HepG2 (cell line): ENCODE measurements at regions of chr5 and their contacts with region 1.

Region 1: GRCh38 chr5:160439205-160439600 is 17.5 kb downstream of the PTTG1 start:
- DNase-seq: peak; percentile 69
- ATAC-seq: peak; percentile 95
- H3K4me3 ChIP-seq: peak overlapping the region; percentile 13 to 60 (median 39)
- H3K27ac ChIP-seq: no peak overlapping the region
- H3K4me1 ChIP-seq: peaks cover 42% of the 10 kb centered on the region
- H3K27me3 ChIP-seq: peaks cover 0 to 1% of the 10 kb centered on the region in 2 experiments; a peak in 1 of 5 replicates
- CTCF ChIP-seq: peak; percentile 92
- EP300 ChIP-seq: no peak
- POLR2A ChIP-seq: no peak
- RAD21 ChIP-seq: peak; percentile 75

Region 2: GRCh38 chr5:160467555-160468362 is 28.6 kb after region 1 on chr5:
- CTCF ChIA-PET with region 1: interaction called, 4 read pairs
- POLR2A ChIA-PET with region 1: interaction called, 29 read pairs
- in situ Hi-C with region 1: no loop called
- intact Hi-C with region 1: loop called (anchors 2 kb)
- DNase-seq: peak; percentile 97
- ATAC-seq: peak; percentile 96
- H3K4me3 ChIP-seq: peak overlapping the region; percentile 75 to 85 (median 81)
- H3K27ac ChIP-seq: peak overlapping the region; percentile 89
- H3K4me1 ChIP-seq: peaks cover 85% of the 10 kb centered on the region
- H3K27me3 ChIP-seq: no peaks in the 10 kb centered on the region; a peak in 1 of 5 replicates
- CTCF ChIP-seq: no peak
- EP300 ChIP-seq: peak in 1 of 2 experiments; percentile 78; a peak in 2 of 4 replicates
- POLR2A ChIP-seq: peak; percentile 78 to 89
- RAD21 ChIP-seq: peak; percentile 21; the same call in 1 of the 2 replicates

Region 3: DNA sequence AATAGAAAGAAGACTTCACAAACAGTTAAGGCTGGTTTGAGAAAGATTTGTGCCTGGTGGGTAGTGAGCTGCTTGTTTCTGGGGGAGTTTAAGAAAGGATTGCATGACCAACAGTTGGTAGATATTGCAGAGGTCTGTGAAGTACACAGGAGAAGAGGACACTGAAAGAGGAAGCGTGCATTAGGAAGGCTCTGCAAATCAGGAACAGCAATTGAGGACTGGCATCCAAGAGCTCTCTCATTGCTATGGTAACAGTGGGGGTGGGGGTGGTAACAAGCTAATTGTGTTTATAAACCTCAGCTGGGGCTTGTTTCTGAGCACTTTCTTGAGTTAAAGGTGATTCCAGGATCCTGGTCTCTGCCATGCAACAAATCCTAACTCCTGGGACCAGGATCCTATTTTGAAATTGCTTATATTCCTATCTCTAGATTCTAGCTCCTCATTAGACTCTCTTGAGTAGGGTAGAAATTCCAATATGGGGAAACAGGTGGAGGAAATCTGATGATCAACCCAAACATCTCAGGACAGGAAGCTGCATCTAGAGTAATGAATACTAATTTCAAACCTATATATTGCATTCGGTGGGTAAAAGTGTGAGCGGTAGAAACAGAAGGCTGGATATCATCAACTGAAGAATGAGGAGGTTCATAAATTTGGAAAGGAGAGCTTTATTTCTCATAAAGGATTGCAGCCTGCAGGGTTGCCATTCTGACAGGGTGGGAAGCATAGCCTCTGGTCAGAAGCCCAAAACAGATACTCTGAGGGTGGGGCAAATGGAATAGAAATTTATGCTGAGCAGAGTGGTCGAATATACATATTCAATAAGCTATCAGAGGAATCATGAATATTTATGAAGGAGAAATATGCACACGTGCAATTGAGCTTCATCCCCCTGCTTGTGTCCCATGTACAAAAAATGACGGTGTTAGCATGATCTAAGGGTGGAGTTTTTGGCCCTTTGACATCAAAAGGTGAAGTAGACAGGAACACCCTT is 61.9 kb after region 1 on chr5:
- CTCF ChIA-PET with region 1: no interaction called
- POLR2A ChIA-PET with region 1: no interaction called
- in situ Hi-C with region 1: loop called (anchors 5 kb)
- intact Hi-C with region 1: no loop called
- DNase-seq: no peak
- ATAC-seq: no peak
- H3K4me3 ChIP-seq: no peak overlapping the region
- H3K27ac ChIP-seq: no peak overlapping the region
- H3K4me1 ChIP-seq: peaks cover 36% of the 10 kb centered on the region
- H3K27me3 ChIP-seq: no peaks in the 10 kb centered on the region
- CTCF ChIP-seq: no peak
- EP300 ChIP-seq: no peak
- POLR2A ChIP-seq: no peak
- RAD21 ChIP-seq: no peak

Region 4: GRCh38 chr5:160685695-160686094 is 246.5 kb after region 1 on chr5:
- CTCF ChIA-PET with region 1: no interaction called
- POLR2A ChIA-PET with region 1: no interaction called
- in situ Hi-C with region 1: no loop called
- intact Hi-C with region 1: loop called (anchors 2 kb)
- DNase-seq: peak; percentile 45
- ATAC-seq: peak; percentile 92
- H3K4me3 ChIP-seq: no peak overlapping the region
- H3K27ac ChIP-seq: no peak overlapping the region
- H3K4me1 ChIP-seq: no peaks in the 10 kb centered on the region
- H3K27me3 ChIP-seq: no peaks in the 10 kb centered on the region
- CTCF ChIP-seq: peak; percentile 51
- EP300 ChIP-seq: no peak
- POLR2A ChIP-seq: no peak
- RAD21 ChIP-seq: 0 out of 2 replicates have a peak, but pooled peaks have one; percentile 16

Region 5: DNA sequence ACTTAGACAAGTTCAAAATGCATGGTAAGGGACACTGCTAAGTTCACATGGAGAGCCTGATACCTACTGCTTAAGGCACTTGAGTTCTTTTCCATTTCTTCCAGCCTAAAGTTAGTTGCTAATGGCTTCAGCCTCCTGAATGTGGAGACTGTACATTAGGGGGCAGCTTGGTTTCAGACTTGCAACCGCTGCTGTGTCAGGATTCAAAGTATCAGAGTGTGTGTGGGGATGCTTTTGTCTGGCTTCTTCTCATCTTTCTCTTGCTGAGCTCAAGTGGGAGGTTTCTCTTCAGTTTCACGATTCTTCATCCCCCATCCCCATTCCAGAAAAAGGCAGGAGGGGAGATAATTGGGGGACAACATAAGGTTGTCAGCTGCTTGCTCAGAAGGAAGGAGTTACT is 363.4 kb after region 1 on chr5:
- CTCF ChIA-PET with region 1: no interaction called
- POLR2A ChIA-PET with region 1: no interaction called
- in situ Hi-C with region 1: loop called (anchors 10 kb)
- intact Hi-C with region 1: no loop called
- DNase-seq: no peak
- ATAC-seq: peak; percentile 71
- H3K4me3 ChIP-seq: no peak overlapping the region
- H3K27ac ChIP-seq: no peak overlapping the region
- H3K4me1 ChIP-seq: no peaks in the 10 kb centered on the region
- H3K27me3 ChIP-seq: no peaks in the 10 kb centered on the region
- CTCF ChIP-seq: peak; percentile 63
- EP300 ChIP-seq: no peak
- POLR2A ChIP-seq: no peak
- RAD21 ChIP-seq: no peak